ENCODE measurements at regions of chr11 and their contacts with region 1.

Region 1: DNA sequence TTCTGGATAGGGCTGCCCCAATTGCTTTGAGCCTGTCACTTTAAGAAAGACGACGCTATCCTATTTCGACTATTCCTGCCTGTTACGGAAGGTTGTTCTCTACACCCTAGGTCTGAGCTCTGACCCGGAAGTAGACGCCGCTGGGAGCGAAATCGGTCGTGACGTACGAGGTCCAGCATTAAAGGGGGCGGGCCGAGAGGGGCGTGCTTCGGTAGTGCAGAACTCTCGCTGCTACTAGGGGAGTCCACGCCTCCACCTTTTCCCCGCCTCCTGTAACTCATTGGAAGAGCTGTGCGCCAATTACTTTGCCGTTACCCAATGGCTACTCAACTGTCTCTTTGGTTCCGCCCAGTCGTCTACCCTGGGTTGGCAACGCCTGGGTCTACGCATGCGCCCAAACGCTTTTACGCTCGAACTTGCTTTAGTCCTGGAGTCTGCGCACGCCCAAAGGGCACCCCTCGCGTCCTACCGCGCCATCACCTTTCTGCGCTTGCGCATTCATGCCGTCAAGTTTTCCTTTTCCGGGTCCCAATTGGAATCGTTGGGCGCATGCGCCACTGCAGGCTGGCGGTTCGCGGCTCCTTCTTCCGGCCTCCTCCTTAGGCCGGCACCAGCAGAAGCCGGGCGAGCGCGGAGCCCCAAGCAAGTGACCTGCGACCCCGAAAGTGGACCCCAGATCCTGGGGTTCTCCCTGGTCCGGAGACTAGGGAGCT is at the start of gene PCNX3:
- DNase-seq: peak; percentile 100
- H3K4me3 Mint-ChIP-seq: peak within 1 kb of the TSS; percentile 97
- H3K27ac Mint-ChIP-seq: peak within 1 kb of the TSS; percentile 94
- H3K4me1 Mint-ChIP-seq: peaks cover 27% of the 10 kb centered on the region
- H3K27me3 Mint-ChIP-seq: no peaks in the 10 kb centered on the region
- total RNA-seq, gene PCNX3: 55.0 and 55.2 TPM in 2 replicates

Region 2: DNA sequence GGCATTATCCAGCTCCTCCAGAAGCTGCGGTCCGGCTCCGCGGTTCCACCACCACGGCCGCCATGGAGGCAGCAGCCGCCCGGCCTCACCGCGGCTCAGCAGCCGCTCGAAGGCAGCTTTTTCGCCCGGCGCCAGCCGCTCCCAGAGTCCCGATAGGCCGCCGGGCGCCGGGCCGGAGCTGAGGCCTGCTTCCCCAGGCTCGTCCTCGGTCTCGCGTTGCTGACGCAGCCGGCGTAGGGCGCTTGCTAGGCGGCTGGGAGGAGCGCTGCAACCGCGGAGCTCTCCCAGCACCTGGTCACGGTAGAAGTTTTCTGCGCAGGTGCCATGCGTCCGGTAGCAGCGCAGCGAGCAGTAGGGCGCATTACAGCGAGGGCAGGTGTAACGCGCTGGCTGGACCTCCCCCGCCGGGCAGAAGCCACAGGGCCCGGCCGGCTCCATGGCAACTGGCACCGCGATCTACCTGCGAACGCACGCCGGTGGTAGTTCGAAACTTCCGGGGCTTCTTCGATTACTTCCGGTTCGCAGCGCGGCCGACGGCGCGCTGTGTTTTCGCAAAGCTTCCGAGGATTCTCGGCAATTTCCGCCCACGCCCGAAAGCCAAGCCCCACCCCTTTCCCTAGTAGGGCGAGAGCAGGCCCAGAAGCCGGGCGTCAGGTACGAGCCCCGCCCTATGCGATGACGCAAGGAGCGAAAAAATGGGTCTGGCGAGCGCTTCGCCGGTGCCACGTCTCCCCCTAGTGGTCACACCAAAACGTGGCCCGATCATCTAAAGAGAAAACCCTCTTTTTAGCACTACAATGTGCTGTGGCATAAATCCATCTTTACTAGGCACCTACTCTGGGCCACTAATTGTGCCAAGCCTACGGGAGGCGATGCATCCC is 497.9 kb before region 1 on chr11 and contains the start of gene ZNHIT2:
- intact Hi-C with region 1: loop called (anchors 10 kb)
- DNase-seq: peak; percentile 100
- H3K4me3 Mint-ChIP-seq: peak within 1 kb of the TSS; percentile 90
- H3K27ac Mint-ChIP-seq: peak within 1 kb of the TSS; percentile 93
- H3K4me1 Mint-ChIP-seq: peaks cover 52% of the 10 kb centered on the region
- H3K27me3 Mint-ChIP-seq: no peaks in the 10 kb centered on the region
- total RNA-seq, gene ZNHIT2: 20.8 and 22.1 TPM in 2 replicates

Region 3: GRCh38 chr11:65569973-65570918 is 45.1 kb before region 1 on chr11 and contains the start of gene ZNRD2:
- intact Hi-C with region 1: loop called (anchors 1 kb)
- DNase-seq: peak; percentile 99
- H3K4me3 Mint-ChIP-seq: peak within 1 kb of the TSS; percentile 99
- H3K27ac Mint-ChIP-seq: peak within 1 kb of the TSS; percentile 98
- H3K4me1 Mint-ChIP-seq: peaks cover 64% of the 10 kb centered on the region
- H3K27me3 Mint-ChIP-seq: no peaks in the 10 kb centered on the region
- total RNA-seq, gene ZNRD2: 94.6 and 96.9 TPM in 2 replicates

Region 4: GRCh38 chr11:65637794-65638317 is 22.5 kb after region 1 on chr11 and contains the start of gene SIPA1:
- intact Hi-C with region 1: loop called (anchors 1 kb)
- DNase-seq: peak; percentile 74
- H3K4me3 Mint-ChIP-seq: peak within 1 kb of the TSS; percentile 82
- H3K27ac Mint-ChIP-seq: peak within 1 kb of the TSS; percentile 83
- H3K4me1 Mint-ChIP-seq: peaks cover 40% of the 10 kb centered on the region
- H3K27me3 Mint-ChIP-seq: no peaks in the 10 kb centered on the region
- total RNA-seq, gene SIPA1: 117 and 130 TPM in 2 replicates

Region 5: GRCh38 chr11:65711785-65712632 is 96.6 kb after region 1 on chr11 and contains the start of gene KAT5:
- intact Hi-C with region 1: loop called (anchors 1 kb)
- DNase-seq: peak; percentile 98
- H3K4me3 Mint-ChIP-seq: peak within 1 kb of the TSS; percentile 96
- H3K27ac Mint-ChIP-seq: peak within 1 kb of the TSS; percentile 98
- H3K4me1 Mint-ChIP-seq: peaks cover 29% of the 10 kb centered on the region
- H3K27me3 Mint-ChIP-seq: no peaks in the 10 kb centered on the region
- total RNA-seq, gene KAT5: 68.1 and 75.0 TPM in 2 replicates

Region 6: GRCh38 chr11:65961232-65961901 is 346.0 kb after region 1 on chr11 and contains the start of gene SART1:
- intact Hi-C with region 1: loop called (anchors 1 kb)
- DNase-seq: peak; percentile 94
- H3K4me3 Mint-ChIP-seq: peak within 1 kb of the TSS; percentile 98
- H3K27ac Mint-ChIP-seq: peak within 1 kb of the TSS; percentile 99
- H3K4me1 Mint-ChIP-seq: peaks cover 41% of the 10 kb centered on the region
- H3K27me3 Mint-ChIP-seq: no peaks in the 10 kb centered on the region
- total RNA-seq, gene SART1: 110 TPM in 2 replicates

Measured in activated T-helper 1 cell treated with anti-CD3 and anti-CD28 coated beads, Interleukin-12 subunit alpha, Interleukin-12 subunit beta, Interleukin-2, Interleukin-4 antibody, amounts not matched to agents 30 ng/mL and 10 ng/mL and 1 ng/mL, durations not matched to agents 14 hours and 24 hours and 36 hours (primary cell).